ENCODE measurements at regions of chr7 and their contacts with region 1.

Region 1: GRCh38 chr7:74449809-74450397 is 3.8 kb upstream of the GTF2IRD1 start:
- DNase-seq: peak; percentile 81
- H3K4me3 Mint-ChIP-seq: no peak overlapping the region
- H3K27ac Mint-ChIP-seq: no peak overlapping the region
- H3K4me1 Mint-ChIP-seq: peaks cover 12% of the 10 kb centered on the region
- H3K27me3 Mint-ChIP-seq: no peaks in the 10 kb centered on the region

Region 2: GRCh38 chr7:73746003-73746777 is 703.7 kb before region 1 on chr7:
- CTCF ChIA-PET with region 1: no interaction called
- intact Hi-C with region 1: no loop called
- DNase-seq: no peak
- H3K4me3 Mint-ChIP-seq: no peak overlapping the region
- H3K27ac Mint-ChIP-seq: no peak overlapping the region
- H3K4me1 Mint-ChIP-seq: no peaks in the 10 kb centered on the region
- H3K27me3 Mint-ChIP-seq: peaks cover 1% of the 10 kb centered on the region

Region 3: GRCh38 chr7:73851410-73852234 is 598.3 kb before region 1 on chr7:
- CTCF ChIA-PET with region 1: no interaction called
- intact Hi-C with region 1: loop called (anchors 5 kb)
- DNase-seq: peak; percentile 60
- H3K4me3 Mint-ChIP-seq: no peak overlapping the region
- H3K27ac Mint-ChIP-seq: peak overlapping the region; percentile 53
- H3K4me1 Mint-ChIP-seq: peaks cover 30% of the 10 kb centered on the region
- H3K27me3 Mint-ChIP-seq: peaks cover 14% of the 10 kb centered on the region

Region 4: DNA sequence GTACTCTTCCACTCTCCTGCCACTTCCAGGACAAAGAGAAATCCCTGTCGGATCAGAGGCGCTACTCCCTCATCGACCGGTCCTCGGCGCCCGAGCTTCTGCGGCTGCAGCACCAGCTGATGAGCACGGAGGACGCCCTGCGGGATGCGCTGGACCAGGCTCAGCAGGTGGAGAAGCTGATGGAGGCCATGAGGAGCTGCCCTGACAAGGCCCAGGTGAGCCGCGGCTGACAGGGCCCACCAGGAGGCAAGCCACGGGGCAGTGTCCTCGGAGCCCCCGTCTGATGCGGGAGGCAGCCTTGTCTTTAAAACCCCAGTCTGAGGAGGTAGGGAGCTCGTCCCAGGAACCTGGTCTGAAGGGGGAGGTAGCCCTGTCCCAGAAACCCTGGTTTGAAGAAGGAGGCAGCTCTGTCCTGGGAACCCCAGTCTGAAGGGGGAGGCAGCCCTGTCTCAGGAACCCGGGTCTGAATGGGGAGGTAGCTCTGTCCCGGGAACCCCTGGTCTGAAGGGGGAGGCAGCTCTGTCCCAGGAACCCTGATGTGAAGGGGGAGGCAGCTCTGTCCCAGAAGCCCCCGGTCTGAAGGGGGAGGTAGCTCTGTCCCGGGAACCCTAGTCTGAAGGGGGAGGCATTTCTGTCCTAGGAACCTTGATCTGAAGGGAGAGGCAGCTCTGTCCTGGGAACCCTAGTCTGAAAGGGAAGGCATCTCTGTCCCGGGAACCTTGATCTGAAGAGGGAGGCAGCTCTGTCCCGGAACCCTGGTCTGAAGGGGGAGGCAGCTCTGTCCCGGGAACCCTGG is 49.4 kb before region 1 on chr7:
- CTCF ChIA-PET with region 1: no interaction called
- intact Hi-C with region 1: no loop called
- DNase-seq: no peak
- H3K4me3 Mint-ChIP-seq: no peak overlapping the region
- H3K27ac Mint-ChIP-seq: no peak overlapping the region
- H3K4me1 Mint-ChIP-seq: no peaks in the 10 kb centered on the region
- H3K27me3 Mint-ChIP-seq: no peaks in the 10 kb centered on the region

Region 5: DNA sequence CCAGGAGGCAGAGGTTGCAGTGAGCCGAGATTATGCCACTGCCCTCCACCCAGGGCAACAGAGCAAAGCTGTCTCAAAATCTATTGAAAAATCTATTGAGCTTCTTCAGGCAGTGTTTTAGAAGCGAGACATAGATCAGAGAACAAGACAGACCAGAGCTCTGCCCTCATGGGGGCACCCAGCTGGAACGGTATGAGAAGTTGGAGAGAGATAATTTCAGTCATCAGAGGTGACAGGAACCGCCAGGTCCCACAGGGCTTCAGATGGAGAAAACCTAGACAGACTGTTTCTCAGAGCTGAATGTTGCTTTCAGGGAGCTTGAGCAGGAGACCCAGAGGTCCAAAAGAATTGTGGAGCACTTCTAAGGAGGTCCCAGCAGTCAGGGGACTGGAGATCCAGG is 10.4 kb before region 1 on chr7:
- CTCF ChIA-PET with region 1: interaction called, 22 read pairs
- intact Hi-C with region 1: no loop called
- DNase-seq: no peak
- H3K4me3 Mint-ChIP-seq: no peak overlapping the region
- H3K27ac Mint-ChIP-seq: no peak overlapping the region
- H3K4me1 Mint-ChIP-seq: no peaks in the 10 kb centered on the region
- H3K27me3 Mint-ChIP-seq: no peaks in the 10 kb centered on the region

Region 6: DNA sequence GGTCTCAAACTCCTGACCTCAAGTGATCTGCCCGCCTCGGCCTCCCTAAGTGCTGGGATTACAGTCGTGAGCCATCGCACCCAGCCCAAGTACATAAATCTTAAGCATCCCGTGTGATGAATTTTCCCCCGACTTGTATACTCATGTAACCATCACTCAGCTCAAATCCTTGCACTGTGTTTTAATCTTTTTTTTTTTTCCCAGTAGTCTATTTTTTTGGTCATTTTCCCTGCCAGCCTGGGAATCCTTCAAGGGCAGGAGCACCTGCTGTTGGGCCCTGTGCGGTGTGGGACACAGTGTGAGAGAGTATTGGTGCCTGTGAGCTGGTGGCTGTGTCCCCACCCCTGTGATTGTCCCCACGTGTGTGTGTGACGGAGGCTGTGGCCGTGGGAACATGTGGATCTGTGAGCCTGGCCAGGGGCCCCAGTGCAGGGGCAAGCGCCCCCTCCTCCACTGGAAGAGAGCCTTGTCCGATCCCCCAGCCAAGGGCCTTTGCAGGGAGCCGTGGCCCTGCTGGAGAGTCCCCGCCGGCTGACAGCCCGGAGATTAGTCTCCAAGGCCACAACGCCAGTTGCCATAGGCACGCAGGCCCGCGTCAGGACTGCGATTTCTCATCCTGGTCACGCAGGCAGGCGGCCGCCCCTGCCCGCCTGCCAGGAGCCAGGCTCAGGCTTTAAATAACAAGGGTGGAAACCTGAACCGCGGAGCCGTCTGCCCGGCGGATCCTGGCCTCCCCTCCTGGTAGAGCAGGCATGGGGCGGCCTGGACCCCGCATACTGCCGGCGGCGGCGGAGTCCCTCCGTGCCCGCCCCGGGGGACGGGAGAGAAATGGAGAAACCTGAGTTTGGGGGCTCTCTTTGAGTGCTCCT is 30.3 kb after region 1 on chr7:
- CTCF ChIA-PET with region 1: no interaction called
- intact Hi-C with region 1: no loop called
- DNase-seq: no peak
- H3K4me3 Mint-ChIP-seq: no peak overlapping the region
- H3K27ac Mint-ChIP-seq: no peak overlapping the region
- H3K4me1 Mint-ChIP-seq: no peaks in the 10 kb centered on the region
- H3K27me3 Mint-ChIP-seq: peaks cover 3% of the 10 kb centered on the region

Region 7: DNA sequence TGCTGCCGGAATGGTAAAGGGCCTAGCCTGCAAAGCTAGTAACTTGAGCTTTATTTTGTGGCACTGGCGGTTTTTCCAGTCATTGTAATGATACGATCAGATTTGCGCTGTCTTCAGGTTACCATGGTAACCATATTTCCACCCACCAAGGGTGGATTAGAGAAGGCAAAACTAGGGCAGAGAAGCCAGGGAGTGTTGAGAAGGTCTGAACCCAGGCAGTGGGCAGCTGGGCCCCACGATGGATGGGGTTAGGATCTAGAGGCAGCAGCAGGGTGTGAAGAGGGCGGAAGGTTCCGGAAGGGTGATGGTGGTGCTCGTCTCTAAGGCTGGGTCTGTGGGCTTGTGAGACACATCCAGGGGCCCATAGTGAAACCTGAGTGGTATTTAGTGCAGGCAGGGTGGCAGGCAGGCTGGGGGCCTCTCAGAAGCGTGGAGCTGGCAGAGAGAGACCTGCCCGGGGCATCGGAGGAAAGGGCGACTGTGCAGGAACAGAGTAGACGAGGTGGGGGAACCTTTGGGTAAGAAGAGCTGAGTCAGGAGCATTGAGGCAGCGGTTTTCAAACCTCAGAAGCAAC is 119.7 kb after region 1 on chr7:
- CTCF ChIA-PET with region 1: interaction called, 15 read pairs
- intact Hi-C with region 1: loop called (anchors 1 kb)
- DNase-seq: no peak
- H3K4me3 Mint-ChIP-seq: no peak overlapping the region
- H3K27ac Mint-ChIP-seq: no peak overlapping the region
- H3K4me1 Mint-ChIP-seq: peaks cover 5% of the 10 kb centered on the region
- H3K27me3 Mint-ChIP-seq: no peaks in the 10 kb centered on the region

Region 8: GRCh38 chr7:74656837-74657691 is 207.2 kb after region 1 on chr7:
- CTCF ChIA-PET with region 1: interaction called, 3 read pairs
- intact Hi-C with region 1: loop called (anchors 1 kb)
- DNase-seq: peak; percentile 98
- H3K4me3 Mint-ChIP-seq: peak overlapping the region; percentile 85
- H3K27ac Mint-ChIP-seq: peak overlapping the region; percentile 82
- H3K4me1 Mint-ChIP-seq: peaks cover 49% of the 10 kb centered on the region
- H3K27me3 Mint-ChIP-seq: peaks cover 1% of the 10 kb centered on the region